WTC11 (cell line): ENCODE measurements at regions of chr17 and their contacts with region 1.

Region 1: GRCh38 chr17:57955183-57955931 is at the start of gene CUEDC1:
- DNase-seq: peak; percentile 74
- ATAC-seq: peak; percentile 61
- H3K4me3 Mint-ChIP-seq: peak within 1 kb of the TSS; percentile 74
- H3K27ac Mint-ChIP-seq: 0 out of 2 replicates have a peak within 1 kb of the TSS, but pooled peaks have one; percentile 6
- H3K4me1 Mint-ChIP-seq: peaks cover 53% of the 10 kb centered on the region
- H3K27me3 Mint-ChIP-seq: peaks cover 48% of the 10 kb centered on the region
- CTCF ChIP-seq: no peak
- total RNA-seq, gene CUEDC1: 6.5 to 12.2 TPM (median 9.4 TPM) in 3 replicates

Region 2: GRCh38 chr17:57868007-57868909 is 87.1 kb before region 1 on chr17:
- CTCF ChIA-PET with region 1: interaction called, 14 read pairs
- POLR2A ChIA-PET with region 1: no interaction called
- DNase-seq: peak; percentile 76
- ATAC-seq: peak; percentile 89
- H3K4me3 Mint-ChIP-seq: no peak overlapping the region
- H3K27ac Mint-ChIP-seq: 0 out of 2 replicates have a peak overlapping the region, but pooled peaks have one; percentile 53
- H3K4me1 Mint-ChIP-seq: peaks cover 47% of the 10 kb centered on the region
- H3K27me3 Mint-ChIP-seq: peaks cover 5% of the 10 kb centered on the region
- CTCF ChIP-seq: peak; percentile 23

Region 3: GRCh38 chr17:57892146-57892828 is 63.1 kb before region 1 on chr17:
- CTCF ChIA-PET with region 1: interaction called, 21 read pairs
- POLR2A ChIA-PET with region 1: no interaction called
- DNase-seq: peak; percentile 96
- ATAC-seq: peak; percentile 91
- H3K4me3 Mint-ChIP-seq: peak overlapping the region; percentile 10; the same call in 1 of the 2 replicates
- H3K27ac Mint-ChIP-seq: peak overlapping the region; percentile 95
- H3K4me1 Mint-ChIP-seq: peaks cover 18% of the 10 kb centered on the region
- H3K27me3 Mint-ChIP-seq: no peaks in the 10 kb centered on the region
- CTCF ChIP-seq: peak; percentile 91

Region 4: GRCh38 chr17:57920916-57921703 is 34.2 kb before region 1 on chr17:
- CTCF ChIA-PET with region 1: interaction called, 10 read pairs
- POLR2A ChIA-PET with region 1: no interaction called
- DNase-seq: no peak
- ATAC-seq: no peak
- H3K4me3 Mint-ChIP-seq: no peak overlapping the region
- H3K27ac Mint-ChIP-seq: no peak overlapping the region
- H3K4me1 Mint-ChIP-seq: peaks cover 44% of the 10 kb centered on the region
- H3K27me3 Mint-ChIP-seq: peaks cover 7% of the 10 kb centered on the region; the same call in 1 of the 2 replicates
- CTCF ChIP-seq: no peak

Region 5: GRCh38 chr17:57965521-57966160 is 10.3 kb after region 1 on chr17:
- CTCF ChIA-PET with region 1: interaction called, 10 read pairs
- POLR2A ChIA-PET with region 1: interaction called, 3 read pairs
- DNase-seq: no peak
- ATAC-seq: peak; percentile 69; the same call in 1 of the 2 replicates
- H3K4me3 Mint-ChIP-seq: no peak overlapping the region
- H3K27ac Mint-ChIP-seq: no peak overlapping the region
- H3K4me1 Mint-ChIP-seq: peaks cover 8% of the 10 kb centered on the region
- H3K27me3 Mint-ChIP-seq: peaks cover 2% of the 10 kb centered on the region; the same call in 1 of the 2 replicates
- CTCF ChIP-seq: no peak

Region 6: GRCh38 chr17:58020401-58020800 is 65.0 kb after region 1 on chr17:
- CTCF ChIA-PET with region 1: no interaction called
- POLR2A ChIA-PET with region 1: no interaction called
- DNase-seq: no peak
- ATAC-seq: no peak
- H3K4me3 Mint-ChIP-seq: no peak overlapping the region
- H3K27ac Mint-ChIP-seq: no peak overlapping the region
- H3K4me1 Mint-ChIP-seq: peaks cover 11% of the 10 kb centered on the region
- H3K27me3 Mint-ChIP-seq: peaks cover 3% of the 10 kb centered on the region; the same call in 1 of the 2 replicates
- CTCF ChIP-seq: no peak